Vagina (tissue), 2 donors: ENCODE measurements at regions of chr9 and their contacts with region 1.

Region 1: DNA sequence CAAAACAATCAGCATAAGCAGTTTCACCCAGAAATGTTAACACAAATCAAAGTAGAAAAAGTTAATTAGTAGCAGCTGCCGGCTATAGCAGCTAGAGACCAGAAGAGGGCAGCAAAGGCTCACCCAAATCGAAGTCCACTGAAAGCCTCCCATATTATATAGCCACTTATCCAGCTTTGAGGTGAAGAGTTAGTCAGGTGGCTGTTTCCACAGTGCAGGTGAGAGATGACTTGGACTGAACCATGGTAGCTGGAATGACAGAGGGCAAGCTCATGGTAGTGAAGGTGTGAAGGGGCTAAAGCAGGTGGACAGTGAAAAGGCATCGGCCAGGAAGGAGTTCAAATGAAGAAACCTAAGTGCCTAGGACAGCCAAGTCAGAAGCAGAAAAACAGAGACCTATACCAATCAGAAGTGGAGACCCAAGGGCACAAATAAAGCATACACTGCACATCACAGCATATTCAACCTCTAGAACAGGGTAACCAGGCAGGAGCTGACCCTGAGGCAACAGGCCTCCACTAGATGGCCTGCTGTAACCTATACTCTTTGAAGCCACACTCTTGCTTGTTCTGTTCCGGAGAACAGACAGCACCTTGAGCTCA is 7.2 kb upstream of the RNF38 start:
- DNase-seq: no peak
- H3K4me3 ChIP-seq: no peak overlapping the region
- H3K27ac ChIP-seq: peak overlapping the region; percentile 2
- H3K4me1 ChIP-seq: no peaks in the 10 kb centered on the region
- H3K27me3 ChIP-seq: no peaks in the 10 kb centered on the region
- CTCF ChIP-seq: peak; percentile 73 to 93 (median 82)
- POLR2A ChIP-seq: no peak

Region 2: DNA sequence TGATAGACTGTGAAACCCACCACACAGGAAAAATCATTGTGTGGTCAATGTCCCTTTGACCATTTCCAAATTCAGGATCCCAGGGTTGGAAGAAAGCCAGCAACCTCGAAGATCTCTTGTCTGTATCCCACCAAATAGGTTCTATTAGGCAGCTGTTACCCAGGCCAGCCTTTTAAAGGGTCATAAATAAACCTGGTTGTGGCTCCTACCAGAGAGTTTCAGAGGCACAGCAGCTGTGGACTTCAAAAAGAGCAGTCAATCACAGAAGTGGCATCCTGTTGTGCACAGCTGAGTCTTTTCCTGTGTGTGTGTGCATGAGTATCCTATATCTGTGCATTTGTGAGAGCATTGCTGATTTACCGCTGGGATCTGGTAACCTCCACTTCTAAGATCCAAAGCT is 425.5 kb before region 1 on chr9:
- intact Hi-C with region 1: no loop called
- DNase-seq: no peak
- H3K4me3 ChIP-seq: no peak overlapping the region
- H3K27ac ChIP-seq: no peak overlapping the region
- H3K4me1 ChIP-seq: no peaks in the 10 kb centered on the region
- H3K27me3 ChIP-seq: no peaks in the 10 kb centered on the region
- CTCF ChIP-seq: no peak
- POLR2A ChIP-seq: no peak

Region 3: DNA sequence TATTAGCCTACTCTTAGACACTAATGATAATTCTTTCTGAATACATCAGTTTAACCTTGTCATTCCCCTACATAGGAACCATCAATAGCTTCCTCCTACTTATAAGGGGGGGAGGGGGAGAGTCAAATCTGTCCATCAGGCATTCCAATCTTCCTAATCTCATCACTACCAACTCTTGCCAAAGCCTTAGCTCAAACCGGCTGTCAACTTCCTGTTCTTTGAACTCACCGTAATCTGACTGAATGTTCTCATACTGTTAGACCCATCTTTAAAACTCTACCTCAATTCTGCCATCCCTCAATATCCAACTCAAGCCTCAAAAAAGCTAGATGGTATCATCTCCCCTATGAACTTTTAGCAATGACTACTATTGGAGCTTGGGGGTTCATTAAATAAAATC is 34.7 kb after region 1 on chr9:
- intact Hi-C with region 1: no loop called
- DNase-seq: no peak
- H3K4me3 ChIP-seq: no peak overlapping the region
- H3K27ac ChIP-seq: no peak overlapping the region
- H3K4me1 ChIP-seq: peaks cover 13% of the 10 kb centered on the region
- H3K27me3 ChIP-seq: no peaks in the 10 kb centered on the region
- CTCF ChIP-seq: no peak
- POLR2A ChIP-seq: no peak

Region 4: GRCh38 chr9:36560857-36561221 is 153.6 kb after region 1 on chr9:
- intact Hi-C with region 1: loop called (anchors 5 kb)
- DNase-seq: no peak
- H3K4me3 ChIP-seq: no peak overlapping the region
- H3K27ac ChIP-seq: no peak overlapping the region
- H3K4me1 ChIP-seq: no peaks in the 10 kb centered on the region
- H3K27me3 ChIP-seq: no peaks in the 10 kb centered on the region
- CTCF ChIP-seq: no peak
- POLR2A ChIP-seq: no peak